Heart left ventricle (tissue), 16 donors: ENCODE measurements at regions of chr17 and their contacts with region 1.

Region 1: GRCh38 chr17:233473-233941 is 52.1 kb upstream of the DOC2B start:
- DNase-seq: peak in 4 of 5 donors; percentile 26 to 66 (median 44)
- ATAC-seq: peak in 3 of 4 donors; percentile 9 to 48 (median 40)
- H3K4me3 ChIP-seq: peak overlapping the region in 9 of 12 donors; percentile 1 to 39 (median 26)
- H3K27ac ChIP-seq: peak overlapping the region; percentile 63 to 89 (median 81)
- H3K4me1 ChIP-seq: peaks cover 0 to 29% (median 7%) of the 10 kb centered on the region in 12 donors
- H3K27me3 ChIP-seq: peaks cover 0 to 2% (median 0%) of the 10 kb centered on the region in 9 donors
- CTCF ChIP-seq: no peak
- POLR2A ChIP-seq: no peak

Region 2: DNA sequence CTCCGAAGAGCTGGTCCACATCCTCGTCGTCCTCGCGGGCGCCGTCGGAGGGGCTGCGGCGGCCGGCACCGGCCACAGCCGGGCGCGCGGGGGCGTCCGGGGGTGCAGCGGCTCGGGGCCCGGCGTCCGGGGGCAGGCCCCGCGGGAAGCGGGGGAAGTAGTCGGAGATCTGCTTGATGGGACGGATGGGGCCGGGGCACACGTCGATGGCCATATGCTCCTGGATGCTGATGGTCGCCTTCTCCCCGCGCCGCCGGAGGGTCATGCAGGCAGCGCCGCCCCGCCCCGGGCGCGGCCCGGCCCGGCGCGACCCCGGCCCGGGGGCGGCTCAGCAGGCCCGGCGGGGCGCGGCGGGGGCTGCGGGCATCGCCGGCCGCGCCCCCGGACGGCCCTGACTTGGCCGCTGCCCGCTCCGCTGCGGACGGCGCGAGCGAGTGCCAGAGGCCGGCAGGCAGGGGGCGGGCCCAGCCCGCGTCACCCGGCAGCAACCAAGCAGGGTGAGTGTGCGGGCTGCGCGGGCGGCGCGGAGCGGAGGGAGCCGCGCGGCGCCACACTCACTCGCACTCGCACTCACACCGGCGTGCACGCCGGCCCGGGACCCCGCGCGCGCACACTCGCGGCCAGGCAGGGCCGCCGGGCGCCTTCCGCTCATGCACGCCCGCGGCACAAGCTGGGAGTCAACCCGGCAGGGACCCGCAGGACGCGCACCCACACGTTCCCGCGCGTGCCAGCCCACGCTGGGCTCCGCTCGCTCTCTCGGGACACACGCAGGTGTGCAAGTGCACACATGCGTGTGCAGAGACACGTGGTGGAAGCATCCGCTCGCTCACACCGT is 52.1 kb before region 1 on chr17 and contains the start of gene DOC2B:
- intact Hi-C with region 1: loop called in 2 of 10 experiments (anchors 5 kb)
- DNase-seq: peak; percentile 52 to 80 (median 66)
- ATAC-seq: peak; percentile 52 to 83 (median 74)
- H3K4me3 ChIP-seq: peak within 1 kb of the TSS; percentile 50 to 75 (median 64)
- H3K27ac ChIP-seq: peak within 1 kb of the TSS; percentile 57 to 92 (median 84)
- H3K4me1 ChIP-seq: peaks cover 0 to 37% (median 16%) of the 10 kb centered on the region in 12 donors
- H3K27me3 ChIP-seq: peaks cover 0 to 45% (median 25%) of the 10 kb centered on the region in 9 donors
- CTCF ChIP-seq: peak in 1 of 12 donors; percentile 15
- POLR2A ChIP-seq: no peak
- total RNA-seq, gene DOC2B: 1.7 to 13.0 (median 6.3) TPM

Region 3: DNA sequence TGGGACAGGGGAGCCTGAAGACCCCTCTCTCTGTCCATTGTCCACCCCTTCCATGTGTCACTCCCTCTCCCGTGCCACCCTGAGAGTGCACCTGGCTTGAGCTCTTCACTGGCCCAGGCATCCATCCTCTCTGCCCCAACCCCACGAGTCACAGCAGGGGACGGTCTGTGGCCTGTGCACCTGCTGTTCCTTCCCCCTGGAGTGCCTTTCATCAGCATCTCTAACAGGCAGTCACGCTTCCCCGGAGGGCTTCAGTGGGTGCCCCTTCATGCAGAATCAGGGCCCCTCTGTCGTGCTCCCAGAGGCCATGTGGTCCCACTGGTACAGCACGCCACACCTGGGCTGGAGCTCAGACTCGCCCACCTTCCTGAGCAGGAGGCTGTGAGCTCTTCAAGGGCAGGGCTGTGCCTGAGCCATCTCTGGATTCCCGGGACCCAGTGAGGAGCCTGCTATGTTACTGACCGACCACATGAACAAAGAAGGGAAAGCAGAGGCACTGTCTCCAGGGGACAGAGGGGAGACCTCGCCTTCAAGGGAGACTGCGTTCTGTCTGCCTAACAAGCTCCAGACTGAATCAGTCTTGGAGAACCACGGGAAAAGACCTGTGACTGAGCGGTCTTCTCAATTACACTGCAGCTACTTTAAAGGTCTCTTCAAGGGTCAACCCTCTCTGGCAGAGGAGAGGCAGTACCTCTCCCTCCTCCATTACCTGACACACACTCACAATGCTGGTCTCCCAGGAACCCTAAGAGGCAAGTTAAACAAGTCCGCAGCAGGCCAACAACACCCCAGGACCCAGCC is 26.7 kb after region 1 on chr17:
- intact Hi-C with region 1: loop called in 1 of 10 experiments (anchors 2 kb)
- DNase-seq: peak in 3 of 5 donors; percentile 5 to 12 (median 10)
- ATAC-seq: peak in 1 of 4 donors; percentile 24
- H3K4me3 ChIP-seq: no peak overlapping the region
- H3K27ac ChIP-seq: peak overlapping the region in 5 of 12 donors; percentile 22 to 77 (median 51)
- H3K4me1 ChIP-seq: peaks cover 0 to 40% (median 13%) of the 10 kb centered on the region in 12 donors
- H3K27me3 ChIP-seq: peaks cover 0 to 4% (median 0%) of the 10 kb centered on the region in 9 donors
- CTCF ChIP-seq: no peak
- POLR2A ChIP-seq: no peak